WTC11 (cell line): ENCODE measurements at regions of chr17 and their contacts with region 1.

Region 1: DNA sequence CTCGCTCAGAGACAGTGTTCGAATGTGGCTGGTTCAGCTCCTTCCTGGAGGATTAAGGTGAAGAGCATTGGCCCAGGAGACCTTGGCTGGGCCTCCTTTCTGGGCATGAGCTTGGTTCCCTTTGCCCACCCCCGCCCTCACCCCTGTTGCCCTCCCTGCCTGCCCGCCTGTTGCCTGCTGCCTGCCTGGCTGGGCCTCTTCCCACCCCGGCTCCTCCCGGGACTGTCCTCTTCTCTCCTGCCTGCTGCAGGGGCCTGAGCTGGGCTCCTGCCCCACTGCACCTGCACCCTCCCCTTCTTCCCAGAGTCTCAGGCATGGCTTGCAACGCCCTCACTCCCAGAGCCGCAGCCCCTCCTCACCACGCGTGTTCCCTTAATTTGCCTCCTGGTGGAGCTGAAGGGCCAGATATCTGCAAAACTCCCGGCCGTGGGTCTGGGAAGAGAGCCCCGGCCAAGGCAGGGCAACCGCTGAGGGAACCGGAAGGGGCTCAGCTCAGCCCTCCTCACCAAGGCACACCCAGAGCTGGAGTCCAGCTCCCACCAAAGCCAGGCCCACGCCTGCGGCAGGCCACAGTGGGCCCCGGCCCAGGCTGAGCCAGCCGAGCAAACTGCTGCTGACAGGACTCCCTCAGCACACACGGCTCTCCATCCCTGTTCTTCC is 31.2 kb downstream of the MNT start:
- DNase-seq: peak; percentile 64
- ATAC-seq: peak; percentile 71
- H3K4me3 Mint-ChIP-seq: no peak overlapping the region
- H3K27ac Mint-ChIP-seq: peak overlapping the region; percentile 80
- H3K4me1 Mint-ChIP-seq: peaks cover 12% of the 10 kb centered on the region
- H3K27me3 Mint-ChIP-seq: no peaks in the 10 kb centered on the region
- CTCF ChIP-seq: no peak

Region 2: DNA sequence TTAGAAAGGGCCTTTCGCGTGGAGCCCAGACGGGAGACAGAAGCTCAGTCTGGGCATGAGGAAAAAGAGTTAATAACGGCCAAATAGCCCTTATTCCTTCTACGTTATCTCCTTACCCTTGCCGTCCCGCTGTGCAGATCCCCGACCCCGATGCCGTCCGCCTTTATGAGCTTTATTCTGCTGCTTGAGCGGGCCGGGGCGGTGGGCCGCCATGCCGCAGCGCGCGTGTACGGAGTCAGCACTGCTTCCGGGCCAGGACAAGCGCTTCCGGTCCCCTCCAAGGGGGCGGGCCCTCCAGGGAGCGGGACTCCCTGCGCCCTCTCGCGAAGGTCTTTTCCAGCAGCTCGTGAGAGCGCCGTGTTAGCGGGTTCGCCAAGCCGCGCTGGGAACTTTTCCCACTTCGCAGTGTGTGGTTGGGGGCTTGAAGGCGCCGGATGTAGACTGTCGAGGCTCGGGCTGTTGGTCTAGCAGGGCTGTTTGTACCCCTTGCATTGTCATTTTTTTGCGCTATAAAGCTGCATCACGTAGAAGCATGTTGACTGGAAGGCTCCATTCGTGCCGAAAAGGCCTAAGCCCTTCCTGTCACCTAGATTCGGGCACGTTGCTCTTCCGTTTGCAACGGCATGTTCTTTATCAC is 33.3 kb before region 1 on chr17 and contains the start of gene TSR1:
- CTCF ChIA-PET with region 1: interaction called, 30 read pairs
- POLR2A ChIA-PET with region 1: interaction called, 3 read pairs
- DNase-seq: peak; percentile 90
- ATAC-seq: peak; percentile 81
- H3K4me3 Mint-ChIP-seq: no peak within 1 kb of the TSS; the same call in 1 of the 2 replicates
- H3K27ac Mint-ChIP-seq: peak within 1 kb of the TSS; percentile 99
- H3K4me1 Mint-ChIP-seq: peaks cover 4% of the 10 kb centered on the region
- H3K27me3 Mint-ChIP-seq: no peaks in the 10 kb centered on the region
- CTCF ChIP-seq: no peak
- total RNA-seq, gene TSR1: 59.1 to 74.3 TPM (median 59.7 TPM) in 3 replicates

Region 3: DNA sequence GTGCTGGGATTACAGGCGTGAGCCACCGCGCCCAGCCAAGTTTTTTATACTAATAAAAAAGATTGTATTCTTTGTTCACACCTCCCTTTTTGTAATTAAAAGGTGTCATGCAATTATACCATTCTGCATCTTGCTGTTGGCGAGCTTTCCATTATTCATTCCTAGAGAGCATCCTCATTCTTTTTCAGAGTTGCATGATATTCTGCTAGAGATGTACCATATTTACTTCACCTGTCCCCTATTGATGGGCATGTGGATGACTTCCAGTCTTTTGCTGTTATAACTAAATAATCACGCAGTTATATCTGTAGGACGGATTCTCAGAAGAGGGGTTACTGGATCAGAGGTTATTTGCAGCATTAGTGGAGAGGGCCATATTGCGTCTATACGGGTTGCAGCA is 15.4 kb before region 1 on chr17:
- CTCF ChIA-PET with region 1: interaction called, 66 read pairs
- POLR2A ChIA-PET with region 1: no interaction called
- DNase-seq: no peak
- ATAC-seq: no peak
- H3K4me3 Mint-ChIP-seq: no peak overlapping the region
- H3K27ac Mint-ChIP-seq: no peak overlapping the region
- H3K4me1 Mint-ChIP-seq: peaks cover 14% of the 10 kb centered on the region; the same call in 1 of the 2 replicates
- H3K27me3 Mint-ChIP-seq: no peaks in the 10 kb centered on the region
- CTCF ChIP-seq: no peak

Region 4: DNA sequence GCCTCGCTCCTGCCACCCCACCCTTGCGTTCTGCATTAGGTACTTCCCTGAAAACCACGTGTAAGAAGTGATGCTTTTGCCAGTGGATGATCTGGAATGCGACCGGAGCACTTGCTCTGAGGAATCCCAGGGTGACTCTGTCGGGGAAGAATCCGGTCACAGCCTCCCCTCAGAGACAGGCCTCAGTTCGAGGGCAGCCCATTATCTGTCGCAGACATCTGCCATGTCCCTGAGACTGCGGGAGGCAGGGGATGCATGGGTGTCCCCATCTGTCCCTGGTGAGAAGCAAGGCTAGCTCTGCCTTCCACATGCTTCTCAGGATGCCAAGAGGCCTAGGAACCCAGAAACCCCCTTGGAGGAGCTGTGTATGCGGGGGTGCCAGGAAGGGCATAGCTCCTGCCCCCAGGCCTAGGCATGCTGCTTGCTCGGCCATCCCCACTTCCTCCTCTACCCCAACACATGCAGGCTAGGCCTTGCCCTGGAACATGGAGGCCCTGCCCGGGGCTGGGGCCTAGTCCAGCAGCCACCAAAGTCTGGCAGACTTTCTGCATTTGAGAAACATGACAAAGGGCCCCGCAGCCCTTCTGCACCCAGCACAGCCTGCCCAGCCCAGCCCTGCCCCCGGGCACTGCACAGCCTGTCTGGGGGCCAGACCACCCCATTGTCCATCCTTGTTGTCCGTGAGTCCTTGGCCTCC is 10.7 kb after region 1 on chr17:
- CTCF ChIA-PET with region 1: interaction called, 67 read pairs
- POLR2A ChIA-PET with region 1: no interaction called
- DNase-seq: no peak
- ATAC-seq: no peak
- H3K4me3 Mint-ChIP-seq: no peak overlapping the region
- H3K27ac Mint-ChIP-seq: peak overlapping the region; percentile 52; the same call in 1 of the 2 replicates
- H3K4me1 Mint-ChIP-seq: peaks cover 13% of the 10 kb centered on the region
- H3K27me3 Mint-ChIP-seq: no peaks in the 10 kb centered on the region
- CTCF ChIP-seq: no peak

Region 5: GRCh38 chr17:2392252-2393173 is 22.8 kb after region 1 on chr17:
- CTCF ChIA-PET with region 1: interaction called, 10 read pairs
- POLR2A ChIA-PET with region 1: interaction called, 3 read pairs
- DNase-seq: peak; percentile 94
- ATAC-seq: peak; percentile 59
- H3K4me3 Mint-ChIP-seq: peak overlapping the region; percentile 80
- H3K27ac Mint-ChIP-seq: peak overlapping the region; percentile 78
- H3K4me1 Mint-ChIP-seq: peaks cover 42% of the 10 kb centered on the region
- H3K27me3 Mint-ChIP-seq: no peaks in the 10 kb centered on the region
- CTCF ChIP-seq: no peak